ENCODE measurements at regions of chr6 and their contacts with region 1.

Region 1: GRCh38 chr6:110039364-110039980 is 61.4 kb downstream of the GPR6 start:
- DNase-seq: peak; percentile 92
- H3K4me3 Mint-ChIP-seq: peak overlapping the region; percentile 84
- H3K27ac Mint-ChIP-seq: peak overlapping the region; percentile 96
- H3K4me1 Mint-ChIP-seq: peaks cover 12% of the 10 kb centered on the region
- H3K27me3 Mint-ChIP-seq: no peaks in the 10 kb centered on the region

Region 2: DNA sequence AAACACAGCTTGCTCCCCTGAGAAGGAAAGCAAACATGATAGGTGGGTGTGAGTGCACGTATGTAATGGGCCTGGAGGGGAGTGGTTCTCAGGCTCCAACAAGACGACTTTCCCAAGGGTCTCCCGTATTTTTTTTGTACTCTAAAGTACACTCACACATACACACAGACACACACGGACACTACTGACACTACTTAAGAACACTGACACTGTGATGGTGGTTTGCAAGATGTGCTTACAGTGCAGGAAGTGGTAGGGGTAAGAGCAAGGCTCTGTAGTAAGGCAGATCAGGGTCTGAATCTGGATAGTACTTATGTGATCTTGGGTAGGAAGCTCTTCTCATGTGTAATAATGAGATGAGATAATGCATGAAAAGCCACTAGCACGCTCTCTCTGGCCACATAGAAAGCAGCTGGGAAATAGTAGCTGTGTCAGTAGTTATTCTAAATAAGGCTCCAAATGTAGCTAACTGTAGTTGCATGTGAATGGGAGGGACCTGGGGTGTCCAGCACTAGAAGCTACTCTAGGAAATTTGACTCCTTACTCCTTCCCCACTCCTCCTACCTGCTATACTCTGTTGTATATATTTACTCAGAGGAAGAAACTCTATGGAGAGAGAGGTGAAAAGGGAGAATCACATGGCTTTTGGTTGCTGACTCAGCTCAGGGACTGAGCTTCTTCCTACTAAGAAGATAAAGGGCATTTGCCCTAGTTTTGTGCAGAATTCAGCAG is 548.1 kb before region 1 on chr6:
- CTCF ChIA-PET with region 1: interaction called, 10 read pairs
- intact Hi-C with region 1: no loop called
- DNase-seq: peak; percentile 25
- H3K4me3 Mint-ChIP-seq: no peak overlapping the region
- H3K27ac Mint-ChIP-seq: peak overlapping the region; percentile 25
- H3K4me1 Mint-ChIP-seq: peaks cover 25% of the 10 kb centered on the region
- H3K27me3 Mint-ChIP-seq: no peaks in the 10 kb centered on the region

Region 3: GRCh38 chr6:109690737-109691621 is 348.5 kb before region 1 on chr6 and contains the starts of genes AK9 and FIG4:
- CTCF ChIA-PET with region 1: interaction called, 19 read pairs
- intact Hi-C with region 1: no loop called
- DNase-seq: peak; percentile 94
- H3K4me3 Mint-ChIP-seq: peak within 1 kb of the TSS; percentile 83
- H3K27ac Mint-ChIP-seq: peak within 1 kb of the TSS; percentile 81
- H3K4me1 Mint-ChIP-seq: peaks cover 26% of the 10 kb centered on the region
- H3K27me3 Mint-ChIP-seq: no peaks in the 10 kb centered on the region
- total RNA-seq, gene AK9: 1.7 TPM
- total RNA-seq, gene FIG4: 14.0 to 16.4 TPM

Region 4: DNA sequence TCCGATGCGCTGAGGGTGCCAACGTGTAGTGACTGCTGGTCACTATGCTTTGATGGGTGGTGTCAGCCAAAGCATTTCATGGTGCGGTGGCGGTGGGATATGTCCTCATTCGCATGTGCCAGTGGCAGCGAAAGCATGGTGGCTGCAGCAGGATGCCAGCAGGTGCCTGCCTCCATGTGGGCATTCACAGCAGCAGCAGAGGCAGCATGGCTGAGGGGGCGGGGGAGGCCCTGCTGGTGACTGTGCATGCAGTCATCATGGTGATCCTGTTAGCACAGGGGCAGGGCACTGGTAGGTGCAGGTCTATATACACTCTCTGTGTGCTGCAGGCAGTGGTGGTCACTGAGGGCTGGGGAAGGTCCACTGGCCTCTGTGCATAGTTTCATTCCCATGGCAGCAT is 326.4 kb before region 1 on chr6:
- CTCF ChIA-PET with region 1: interaction called, 31 read pairs
- intact Hi-C with region 1: no loop called
- DNase-seq: peak; percentile 45
- H3K4me3 Mint-ChIP-seq: no peak overlapping the region
- H3K27ac Mint-ChIP-seq: peak overlapping the region; percentile 50
- H3K4me1 Mint-ChIP-seq: peaks cover 5% of the 10 kb centered on the region
- H3K27me3 Mint-ChIP-seq: no peaks in the 10 kb centered on the region

Region 5: GRCh38 chr6:109978174-109979032 is 61.1 kb before region 1 on chr6 and contains the start of gene GPR6:
- CTCF ChIA-PET with region 1: interaction called, 10 read pairs
- intact Hi-C with region 1: loop called (anchors 1 kb)
- DNase-seq: peak; percentile 79
- H3K4me3 Mint-ChIP-seq: no peak within 1 kb of the TSS
- H3K27ac Mint-ChIP-seq: no peak within 1 kb of the TSS
- H3K4me1 Mint-ChIP-seq: peaks cover 3% of the 10 kb centered on the region
- H3K27me3 Mint-ChIP-seq: peaks cover 59% of the 10 kb centered on the region
- total RNA-seq, gene GPR6: not detected

Region 6: GRCh38 chr6:110053395-110054240 is 14.1 kb after region 1 on chr6:
- CTCF ChIA-PET with region 1: interaction called, 36 read pairs
- intact Hi-C with region 1: no loop called
- DNase-seq: peak; percentile 27
- H3K4me3 Mint-ChIP-seq: no peak overlapping the region
- H3K27ac Mint-ChIP-seq: no peak overlapping the region
- H3K4me1 Mint-ChIP-seq: no peaks in the 10 kb centered on the region
- H3K27me3 Mint-ChIP-seq: peaks cover 5% of the 10 kb centered on the region

Region 7: GRCh38 chr6:110446405-110446804 is 406.9 kb after region 1 on chr6:
- CTCF ChIA-PET with region 1: no interaction called
- intact Hi-C with region 1: no loop called
- DNase-seq: no peak
- H3K4me3 Mint-ChIP-seq: no peak overlapping the region
- H3K27ac Mint-ChIP-seq: no peak overlapping the region
- H3K4me1 Mint-ChIP-seq: no peaks in the 10 kb centered on the region
- H3K27me3 Mint-ChIP-seq: peaks cover 6% of the 10 kb centered on the region